Activated CD8-positive, alpha-beta T cell treated with anti-CD3 and anti-CD28 coated beads for 36 hours (primary cell): ENCODE measurements at regions of chr7 and their contacts with region 1.

Region 1: DNA sequence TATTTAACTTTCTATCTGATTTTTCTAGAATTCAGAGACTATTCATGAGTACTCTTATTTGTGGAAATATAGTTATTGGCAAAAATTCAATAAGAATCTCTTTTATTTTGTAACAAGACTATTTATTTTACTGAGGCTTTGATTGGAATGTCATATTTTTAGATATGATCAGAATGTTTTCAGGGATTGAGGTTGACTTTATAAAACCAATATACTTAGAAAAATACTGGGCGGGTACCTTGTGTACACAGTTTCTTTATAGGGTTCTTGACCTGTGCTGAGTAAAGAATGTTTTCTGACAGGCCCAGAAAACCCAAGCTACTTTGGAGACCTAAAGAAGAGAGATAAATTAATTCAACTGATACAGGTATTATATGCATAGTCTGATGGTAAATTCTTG is 24.0 kb upstream of the SPAM1 start:
- DNase-seq: no peak
- ATAC-seq: no peak
- H3K4me3 Mint-ChIP-seq: no peak overlapping the region
- H3K27ac Mint-ChIP-seq: no peak overlapping the region
- H3K4me1 Mint-ChIP-seq: no peaks in the 10 kb centered on the region
- H3K27me3 Mint-ChIP-seq: no peaks in the 10 kb centered on the region
- CTCF ChIP-seq: no peak

Region 2: GRCh38 chr7:123871998-123872867 is 28.8 kb before region 1 on chr7:
- CTCF ChIA-PET with region 1: no interaction called
- POLR2A ChIA-PET with region 1: no interaction called
- intact Hi-C with region 1: no loop called
- DNase-seq: peak; percentile 61
- ATAC-seq: peak; percentile 82
- H3K4me3 Mint-ChIP-seq: no peak overlapping the region
- H3K27ac Mint-ChIP-seq: no peak overlapping the region
- H3K4me1 Mint-ChIP-seq: no peaks in the 10 kb centered on the region
- H3K27me3 Mint-ChIP-seq: peaks cover 12% of the 10 kb centered on the region
- CTCF ChIP-seq: peak; percentile 66

Region 3: GRCh38 chr7:123916240-123916724 is 15.2 kb after region 1 on chr7:
- CTCF ChIA-PET with region 1: no interaction called
- POLR2A ChIA-PET with region 1: no interaction called
- intact Hi-C with region 1: no loop called
- DNase-seq: no peak
- ATAC-seq: no peak
- H3K4me3 Mint-ChIP-seq: no peak overlapping the region
- H3K27ac Mint-ChIP-seq: no peak overlapping the region
- H3K4me1 Mint-ChIP-seq: no peaks in the 10 kb centered on the region
- H3K27me3 Mint-ChIP-seq: peaks cover 2% of the 10 kb centered on the region
- CTCF ChIP-seq: no peak

Region 4: DNA sequence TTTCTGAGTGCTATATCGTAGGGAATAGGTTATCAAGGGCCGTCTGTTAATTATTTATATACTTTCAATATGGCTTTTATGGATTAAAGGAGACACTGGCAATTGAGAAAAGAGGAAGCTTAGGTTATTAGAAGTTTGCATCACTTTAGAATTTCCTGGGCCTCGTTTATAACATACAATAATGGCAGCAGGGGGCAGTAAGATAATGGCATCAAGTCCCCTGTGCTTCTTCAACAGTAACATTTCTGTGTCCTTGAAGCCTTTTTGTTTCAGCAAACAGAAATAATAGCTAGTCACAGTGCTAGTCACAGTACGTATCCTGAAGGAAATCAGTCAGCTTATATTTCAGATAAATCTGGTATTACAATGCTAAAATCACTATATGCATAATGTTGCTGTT is 65.9 kb after region 1 on chr7:
- CTCF ChIA-PET with region 1: no interaction called
- POLR2A ChIA-PET with region 1: no interaction called
- intact Hi-C with region 1: loop called (anchors 10 kb)
- DNase-seq: no peak
- ATAC-seq: no peak
- H3K4me3 Mint-ChIP-seq: no peak overlapping the region
- H3K27ac Mint-ChIP-seq: no peak overlapping the region
- H3K4me1 Mint-ChIP-seq: no peaks in the 10 kb centered on the region
- H3K27me3 Mint-ChIP-seq: no peaks in the 10 kb centered on the region
- CTCF ChIP-seq: no peak